ENCODE measurements at regions of chr4 and their contacts with region 1.

Region 1: DNA sequence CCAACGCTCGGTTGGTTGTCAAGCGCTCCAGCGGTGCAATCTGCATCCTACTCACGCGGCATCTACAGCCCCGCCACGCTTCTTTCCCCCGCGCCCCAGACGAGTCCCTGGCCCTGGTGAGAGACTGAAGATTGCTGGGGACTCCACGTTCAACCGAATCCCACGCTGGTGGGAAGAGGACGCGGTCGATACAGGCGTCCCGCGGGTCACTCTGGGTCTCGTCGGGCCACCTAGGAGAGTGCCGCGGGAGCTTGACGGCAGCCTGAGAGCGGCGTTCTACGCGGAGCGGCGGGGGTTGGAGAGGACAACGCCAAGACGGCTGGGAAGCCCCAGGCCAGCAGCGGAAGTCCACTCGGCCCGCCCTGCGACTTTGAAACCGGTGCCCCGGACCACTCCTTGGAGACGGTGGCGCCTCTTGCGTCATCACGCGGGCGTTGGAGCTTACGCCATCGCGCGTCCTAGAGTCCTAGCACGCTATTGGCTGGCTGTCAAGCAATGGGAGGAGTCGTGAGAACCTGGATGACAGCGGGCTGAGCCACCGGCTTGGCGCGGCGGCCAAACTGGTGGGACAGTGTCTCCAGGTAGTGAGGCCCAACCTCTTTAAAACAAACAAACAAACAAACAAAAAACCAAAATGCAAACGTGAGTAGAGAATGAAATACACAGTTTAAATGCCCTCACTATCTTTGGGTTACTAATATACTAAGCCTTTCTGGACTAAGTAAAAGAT is at the start of gene SCLT1:
- DNase-seq: peak; percentile 94
- ATAC-seq: peak; percentile 92
- H3K4me3 Mint-ChIP-seq: no peak within 1 kb of the TSS
- H3K27ac Mint-ChIP-seq: no peak within 1 kb of the TSS
- H3K4me1 Mint-ChIP-seq: peaks cover 45% of the 10 kb centered on the region
- H3K27me3 Mint-ChIP-seq: no peaks in the 10 kb centered on the region
- CTCF ChIP-seq: no peak
- total RNA-seq, gene SCLT1: 24.5 and 25.0 TPM in 2 replicates

Region 2: GRCh38 chr4:128916832-128917231 is 176.5 kb before region 1 on chr4:
- CTCF ChIA-PET with region 1: no interaction called
- POLR2A ChIA-PET with region 1: no interaction called
- intact Hi-C with region 1: loop called (anchors 2 kb)
- DNase-seq: peak; percentile 16
- ATAC-seq: peak; percentile 93
- H3K4me3 Mint-ChIP-seq: peak overlapping the region; percentile 55
- H3K27ac Mint-ChIP-seq: peak overlapping the region; percentile 79
- H3K4me1 Mint-ChIP-seq: peaks cover 23% of the 10 kb centered on the region
- H3K27me3 Mint-ChIP-seq: no peaks in the 10 kb centered on the region
- CTCF ChIP-seq: no peak